ENCODE measurements at regions of chr5 and their contacts with region 1.

Region 1: GRCh38 chr5:180291943-180292831 is at the start of gene MAPK9:
- DNase-seq: peak; percentile 97

Region 2: GRCh38 chr5:180212363-180213255 is 79.6 kb before region 1 on chr5:
- CTCF ChIA-PET with region 1: no interaction called
- POLR2A ChIA-PET with region 1: no interaction called
- DNase-seq: no peak

Region 3: GRCh38 chr5:180315762-180316212 is 23.6 kb after region 1 on chr5:
- CTCF ChIA-PET with region 1: interaction called, 12 read pairs
- POLR2A ChIA-PET with region 1: interaction called, 6 read pairs
- DNase-seq: peak; percentile 82

Region 4: DNA sequence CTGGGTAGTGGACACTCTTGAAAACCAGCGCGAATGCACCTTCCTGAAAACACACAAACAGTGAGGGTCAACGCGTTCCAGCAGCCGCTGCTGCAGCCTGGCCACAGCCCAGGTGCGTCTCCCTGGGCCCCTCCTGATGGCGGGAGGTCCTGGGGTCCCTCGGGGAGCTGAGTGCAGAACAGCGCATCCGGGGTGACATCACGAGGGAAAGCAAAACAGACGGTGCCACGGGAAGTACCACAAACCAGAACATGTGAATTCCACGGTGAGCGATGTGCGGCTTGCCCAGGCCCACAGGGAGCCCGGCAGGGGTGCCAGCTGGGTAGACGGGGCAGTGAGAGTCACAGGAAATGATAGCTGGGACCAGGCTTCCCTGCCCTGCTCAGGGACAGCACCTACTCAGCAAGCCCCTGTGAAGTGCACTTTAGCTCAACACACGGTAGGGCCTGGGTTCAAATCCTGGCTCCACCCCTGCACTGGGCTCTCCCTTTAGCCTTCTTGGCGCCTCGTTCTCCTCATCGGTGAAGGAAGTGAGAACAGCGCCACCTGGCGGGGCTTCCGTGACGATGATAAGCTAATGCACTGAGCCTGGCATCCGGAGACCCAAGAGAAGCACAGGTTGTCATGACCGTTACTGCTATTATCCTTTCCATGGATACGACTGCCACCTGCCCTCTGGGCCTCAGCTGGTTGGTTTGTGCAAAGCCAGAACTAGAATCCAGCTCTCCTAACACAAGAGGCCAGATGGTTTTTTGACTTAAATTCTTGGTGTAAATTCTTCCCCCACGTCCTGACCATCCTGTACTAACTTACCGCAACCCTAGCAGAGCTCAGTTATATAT is 36.3 kb after region 1 on chr5:
- CTCF ChIA-PET with region 1: interaction called, 21 read pairs
- POLR2A ChIA-PET with region 1: interaction called, 5 read pairs
- DNase-seq: peak; percentile 92

Region 5: DNA sequence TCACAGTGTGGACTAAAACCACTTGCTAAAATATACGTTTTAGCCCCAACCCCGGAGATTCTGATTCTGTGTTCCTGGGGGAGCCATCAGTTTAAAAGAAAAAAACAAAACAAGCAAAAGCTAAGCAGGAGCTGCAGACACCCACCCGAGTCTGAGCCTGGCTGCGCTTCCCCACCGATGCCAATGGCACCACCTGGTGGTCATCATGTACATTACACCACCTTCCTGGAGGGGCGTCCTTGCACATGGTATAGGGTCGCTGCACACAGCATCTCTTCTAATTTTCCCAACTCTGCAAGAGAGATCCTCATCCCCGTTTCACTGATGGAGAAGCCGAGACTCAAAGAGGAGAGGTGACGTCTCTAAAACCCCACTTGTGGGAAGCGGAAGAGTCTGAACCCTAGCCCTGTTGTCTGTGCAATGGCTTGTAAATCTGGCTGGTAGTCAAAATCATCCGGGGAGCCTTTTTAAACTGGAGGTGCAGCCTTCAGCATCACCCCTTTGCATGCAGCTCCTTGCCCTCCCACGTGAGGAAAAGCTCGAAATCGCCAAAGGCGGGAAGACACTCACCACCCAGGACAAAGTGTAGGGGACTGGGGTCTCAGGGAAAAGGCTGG is 178.9 kb after region 1 on chr5:
- CTCF ChIA-PET with region 1: interaction called, 21 read pairs
- POLR2A ChIA-PET with region 1: interaction called, 3 read pairs
- DNase-seq: peak; percentile 88

Measured in HEK293T (cell line).